Naive thymus-derived CD4-positive, alpha-beta T cell (primary cell): ENCODE measurements at regions of chr9 and their contacts with region 1.

Region 1: GRCh38 chr9:134217832-134218629 is 53.7 kb upstream of the RNU6ATAC start:
- DNase-seq: no peak
- ATAC-seq: no peak
- H3K4me3 ChIP-seq: no peak overlapping the region
- H3K4me3 Mint-ChIP-seq: no peak overlapping the region
- H3K27ac ChIP-seq: no peak overlapping the region
- H3K27ac Mint-ChIP-seq: no peak overlapping the region
- H3K4me1 ChIP-seq: no peaks in the 10 kb centered on the region
- H3K4me1 Mint-ChIP-seq: peaks cover 0 to 2% (median 0%) of the 10 kb centered on the region in 7 donors
- H3K27me3 ChIP-seq: no peaks in the 10 kb centered on the region
- H3K27me3 Mint-ChIP-seq: no peaks in the 10 kb centered on the region

Region 2: DNA sequence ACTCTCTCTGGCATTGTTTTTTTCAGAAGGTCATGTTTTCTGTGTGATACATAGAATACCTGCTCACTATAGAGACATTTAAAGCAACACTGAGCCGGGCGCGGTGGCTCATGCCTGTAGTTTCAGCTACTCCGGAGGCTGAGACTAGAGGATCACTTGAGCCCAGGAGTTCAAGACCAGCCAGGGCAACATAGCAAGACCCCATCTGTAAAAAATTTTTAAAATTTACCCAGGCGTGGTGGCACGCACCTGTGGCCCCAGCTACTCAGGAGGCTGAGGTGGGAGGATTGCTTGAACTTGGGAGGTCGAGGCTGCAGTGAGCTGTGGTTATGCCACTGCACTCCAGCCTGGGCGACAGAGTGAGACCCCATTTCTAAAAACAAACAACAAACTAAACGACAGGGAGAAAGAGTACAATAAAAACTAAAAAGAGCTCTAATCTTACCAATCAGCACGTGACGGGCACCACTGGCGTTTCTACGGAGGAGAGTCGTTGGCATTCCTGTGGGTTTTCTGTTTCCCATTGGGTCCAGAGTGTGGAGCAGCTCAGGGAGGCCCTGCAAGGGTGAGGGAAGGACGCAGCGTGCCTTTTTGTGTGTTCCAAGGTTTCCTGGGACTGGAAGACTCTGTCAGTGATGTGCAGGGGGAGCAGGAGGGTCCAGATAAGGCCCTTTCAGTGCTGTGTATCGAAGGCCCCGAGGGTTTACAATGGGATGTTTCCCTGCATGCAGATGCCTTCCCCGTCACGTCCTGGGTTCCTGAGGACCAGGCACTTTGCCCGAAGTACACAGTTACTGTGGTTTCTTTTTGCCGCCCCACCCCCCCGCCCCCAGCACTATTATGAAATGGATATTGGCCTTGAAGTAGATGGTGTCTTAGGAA is 46.5 kb before region 1 on chr9:
- CTCF ChIA-PET with region 1: interaction called, 3 read pairs
- POLR2A ChIA-PET with region 1: no interaction called
- intact Hi-C with region 1: loop called in 1 of 2 experiments (anchors 2 kb)
- DNase-seq: no peak
- ATAC-seq: no peak
- H3K4me3 ChIP-seq: no peak overlapping the region
- H3K4me3 Mint-ChIP-seq: no peak overlapping the region
- H3K27ac ChIP-seq: no peak overlapping the region
- H3K27ac Mint-ChIP-seq: peak overlapping the region in 2 of 9 donors; percentile 33 to 59
- H3K4me1 ChIP-seq: no peaks in the 10 kb centered on the region
- H3K4me1 Mint-ChIP-seq: peaks cover 0 to 2% (median 0%) of the 10 kb centered on the region in 7 donors
- H3K27me3 ChIP-seq: no peaks in the 10 kb centered on the region
- H3K27me3 Mint-ChIP-seq: no peaks in the 10 kb centered on the region